Transverse colon (tissue), 4 donors: ENCODE measurements at regions of chr17 and their contacts with region 1.

Region 1: DNA sequence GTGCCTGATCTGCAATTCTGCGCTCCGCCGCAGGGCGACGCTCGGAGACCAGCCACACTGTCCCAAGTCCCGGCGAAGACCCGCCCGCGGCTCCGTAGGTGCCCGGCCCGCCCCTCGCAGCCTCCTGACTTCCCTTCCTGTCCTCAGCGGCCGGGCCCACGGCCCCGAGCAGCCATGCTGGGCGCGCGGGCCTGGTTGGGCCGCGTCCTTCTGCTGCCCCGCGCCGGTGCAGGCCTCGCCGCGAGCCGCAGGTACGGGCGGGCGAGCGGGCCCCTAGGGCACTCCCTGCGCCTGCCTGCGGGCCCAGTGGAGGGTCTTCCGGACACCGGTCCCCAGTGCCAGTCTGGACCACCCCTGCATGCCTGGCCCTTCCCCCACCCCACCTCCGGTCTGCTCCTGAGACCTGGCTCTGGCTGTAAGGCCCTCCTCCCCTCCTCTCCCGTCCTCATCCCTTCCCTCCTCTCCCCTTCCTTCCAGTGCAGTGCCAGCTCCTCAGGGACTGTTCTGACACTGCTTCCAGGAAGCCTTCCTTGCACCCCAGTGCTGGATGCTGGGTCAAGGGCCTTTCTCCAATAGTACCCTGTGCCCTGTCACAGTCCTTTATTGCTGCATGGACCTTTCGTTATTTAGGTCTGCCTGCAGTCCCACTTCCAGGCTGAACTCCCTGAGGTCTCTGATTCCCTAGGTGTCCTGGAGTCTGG is at the start of gene SPATA20:
- DNase-seq: peak; percentile 95
- H3K4me3 ChIP-seq: peak within 1 kb of the TSS; percentile 23 to 65 (median 56)
- H3K27ac ChIP-seq: peak within 1 kb of the TSS; percentile 85 to 91 (median 90)
- H3K4me1 ChIP-seq: peaks cover 11 to 46% (median 33%) of the 10 kb centered on the region in 4 donors
- H3K27me3 ChIP-seq: no peaks in the 10 kb centered on the region
- CTCF ChIP-seq: peak; percentile 96 to 99 (median 98)
- EP300 ChIP-seq: no peak
- POLR2A ChIP-seq: peak; percentile 82
- total RNA-seq, gene SPATA20: 116 to 437 (median 228) TPM

Region 2: GRCh38 chr17:50266303-50267073 is 280.7 kb before region 1 on chr17:
- in situ Hi-C with region 1: no loop called
- intact Hi-C with region 1: no loop called
- DNase-seq: peak; percentile 39
- H3K4me3 ChIP-seq: no peak overlapping the region
- H3K27ac ChIP-seq: peak overlapping the region; percentile 15 to 71 (median 36)
- H3K4me1 ChIP-seq: peaks cover 12 to 23% (median 21%) of the 10 kb centered on the region in 4 donors
- H3K27me3 ChIP-seq: no peaks in the 10 kb centered on the region
- CTCF ChIP-seq: no peak
- EP300 ChIP-seq: no peak
- POLR2A ChIP-seq: no peak

Region 3: DNA sequence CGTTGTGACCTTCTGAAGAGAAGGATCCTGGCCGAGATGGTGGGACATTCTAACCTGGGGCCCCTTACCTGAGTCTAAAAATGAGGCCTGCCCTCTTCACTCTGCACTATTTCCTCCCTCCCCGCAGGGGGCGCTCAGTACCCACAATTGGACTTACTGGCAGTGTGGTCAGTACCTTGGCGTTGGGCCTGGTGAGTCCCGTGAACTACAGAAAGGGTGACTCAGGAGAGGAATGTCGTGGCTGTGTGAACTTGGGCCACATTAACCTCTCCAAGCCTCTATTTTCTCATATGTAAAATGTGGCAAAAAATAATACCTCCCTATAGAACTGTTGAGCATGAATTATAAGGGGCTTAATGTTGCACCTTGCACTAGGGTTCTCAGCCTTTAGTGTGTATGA is 64.7 kb before region 1 on chr17:
- in situ Hi-C with region 1: loop called in 1 of 4 experiments (anchors 10 kb)
- intact Hi-C with region 1: loop called (anchors 10 kb)
- DNase-seq: peak; percentile 94
- H3K4me3 ChIP-seq: no peak overlapping the region
- H3K27ac ChIP-seq: peak overlapping the region; percentile 78 to 83 (median 80)
- H3K4me1 ChIP-seq: peaks cover 15 to 38% (median 22%) of the 10 kb centered on the region in 4 donors
- H3K27me3 ChIP-seq: no peaks in the 10 kb centered on the region
- CTCF ChIP-seq: peak; percentile 67 to 98 (median 90)
- EP300 ChIP-seq: no peak
- POLR2A ChIP-seq: no peak

Region 4: DNA sequence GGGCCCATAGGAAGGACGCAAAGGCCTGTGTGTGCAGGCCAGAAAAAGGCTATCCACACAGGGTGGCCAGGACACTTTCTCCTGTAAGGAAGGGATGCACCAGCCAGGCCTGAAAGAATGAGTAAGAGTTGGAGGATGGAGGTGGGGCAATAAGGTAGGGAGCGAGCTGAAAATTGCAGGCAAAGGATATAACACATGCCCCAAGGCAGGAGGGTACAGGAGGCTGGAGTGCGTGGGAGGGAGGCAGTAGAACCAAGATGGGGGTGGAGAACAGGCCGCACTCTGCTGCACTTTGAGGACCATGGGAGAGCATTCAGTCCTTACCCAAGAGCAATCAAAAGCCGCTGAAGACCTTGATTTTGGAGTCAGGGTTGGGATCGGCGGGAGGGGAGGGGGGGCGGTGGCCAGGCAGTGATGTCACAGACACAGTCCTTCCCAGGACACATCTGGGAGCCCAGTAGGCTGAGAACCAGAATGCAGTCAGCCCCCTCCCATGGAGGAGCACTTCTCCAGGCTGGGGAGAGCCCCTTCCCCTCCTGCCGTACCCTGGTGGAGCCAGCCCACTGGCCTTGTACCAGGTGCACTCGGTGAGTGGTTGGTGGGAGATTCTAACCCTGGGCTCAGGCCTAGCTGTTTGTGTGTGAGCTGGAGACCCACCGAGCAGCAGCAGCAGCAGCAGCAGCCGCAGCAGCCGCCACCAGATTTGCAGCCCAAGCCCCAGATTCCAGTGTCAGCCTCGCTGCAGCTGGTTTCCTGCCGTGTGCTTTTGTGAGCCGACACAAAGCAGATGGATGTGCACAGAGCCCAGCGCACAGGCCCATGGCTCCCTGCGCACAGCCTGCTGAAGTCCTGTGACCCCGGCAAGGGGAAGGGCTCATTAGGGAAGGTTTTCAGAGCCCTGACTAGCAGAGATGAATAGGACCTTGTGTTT is 143.0 kb after region 1 on chr17:
- in situ Hi-C with region 1: loop called (anchors 10 kb)
- intact Hi-C with region 1: loop called (anchors 5 kb)
- DNase-seq: no peak
- H3K4me3 ChIP-seq: no peak overlapping the region
- H3K27ac ChIP-seq: peak overlapping the region; percentile 85 to 89 (median 88)
- H3K4me1 ChIP-seq: peaks cover 67 to 97% (median 80%) of the 10 kb centered on the region in 4 donors
- H3K27me3 ChIP-seq: no peaks in the 10 kb centered on the region
- CTCF ChIP-seq: no peak
- EP300 ChIP-seq: no peak
- POLR2A ChIP-seq: no peak

Region 5: GRCh38 chr17:50834429-50835300 is 287.5 kb after region 1 on chr17:
- in situ Hi-C with region 1: loop called in 2 of 4 experiments (anchors 10 to 25 kb)
- intact Hi-C with region 1: no loop called
- DNase-seq: no peak
- H3K4me3 ChIP-seq: peak overlapping the region in 3 of 4 donors; percentile 14 to 34 (median 14)
- H3K27ac ChIP-seq: no peak overlapping the region
- H3K4me1 ChIP-seq: peaks cover 0 to 15% (median 13%) of the 10 kb centered on the region in 4 donors
- H3K27me3 ChIP-seq: peaks cover 24% of the 10 kb centered on the region
- CTCF ChIP-seq: no peak
- EP300 ChIP-seq: no peak
- POLR2A ChIP-seq: no peak

Region 6: GRCh38 chr17:50949989-50950881 is 403.1 kb after region 1 on chr17:
- in situ Hi-C with region 1: loop called in 1 of 4 experiments (anchors 25 kb)
- intact Hi-C with region 1: no loop called
- DNase-seq: peak; percentile 81
- H3K4me3 ChIP-seq: peak overlapping the region in 1 of 4 donors; percentile 2
- H3K27ac ChIP-seq: peak overlapping the region; percentile 76 to 94 (median 91)
- H3K4me1 ChIP-seq: peaks cover 23 to 68% (median 53%) of the 10 kb centered on the region in 4 donors
- H3K27me3 ChIP-seq: no peaks in the 10 kb centered on the region
- CTCF ChIP-seq: peak; percentile 68 to 96 (median 83)
- EP300 ChIP-seq: peak; percentile 64
- POLR2A ChIP-seq: peak; percentile 46